ENCODE measurements at regions of chr1 and their contacts with region 1.

Region 1: GRCh38 chr1:19240673-19241538 is 10.4 kb downstream of the EMC1 start:
- DNase-seq: peak; percentile 82

Region 2: DNA sequence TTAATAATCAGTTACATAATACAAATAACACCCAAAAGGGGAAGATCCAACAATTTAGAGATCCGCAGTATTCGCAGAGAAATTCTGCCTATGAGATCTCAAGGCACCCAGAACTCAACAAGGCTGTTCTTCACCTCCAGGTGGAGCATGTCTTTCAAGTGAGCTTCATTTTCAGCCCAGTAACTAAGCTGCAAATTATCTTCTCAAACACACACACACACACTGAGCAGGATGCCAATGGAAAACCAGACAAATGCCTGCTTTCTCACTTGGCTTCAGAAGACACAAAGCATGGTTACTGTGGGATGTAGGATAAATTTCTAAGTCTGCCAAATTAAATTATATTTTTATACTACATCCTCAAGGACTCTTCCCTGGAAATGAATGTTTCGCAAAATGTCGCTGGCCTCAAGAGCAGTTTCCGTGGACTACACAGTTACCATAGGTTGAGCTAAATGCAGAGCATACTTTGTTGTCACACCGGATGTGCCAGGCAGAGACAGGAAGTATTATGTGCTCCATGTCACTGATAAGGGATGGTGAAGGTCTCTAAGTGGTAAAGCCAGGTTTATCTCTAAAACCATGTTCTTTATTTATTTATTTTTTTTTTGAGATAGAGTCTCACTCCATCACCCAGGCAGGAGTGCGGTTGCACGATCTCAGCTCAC is 61.2 kb before region 1 on chr1:
- intact Hi-C with region 1: loop called (anchors 5 kb)
- DNase-seq: no peak